ENCODE measurements at regions of chr16 and their contacts with region 1.

Region 1: GRCh38 chr16:1839554-1839953 is 12.5 kb downstream of the FAHD1 start:
- DNase-seq: no peak
- H3K4me3 ChIP-seq: no peak overlapping the region
- H3K27ac ChIP-seq: no peak overlapping the region
- H3K4me1 ChIP-seq: no peaks in the 10 kb centered on the region
- H3K27me3 ChIP-seq: no peaks in the 10 kb centered on the region
- CTCF ChIP-seq: no peak
- POLR2A ChIP-seq: no peak

Region 2: GRCh38 chr16:1871974-1872635 is 32.6 kb after region 1 on chr16 and contains the start of gene MEIOB:
- CTCF ChIA-PET with region 1: interaction called, 3 read pairs
- POLR2A ChIA-PET with region 1: no interaction called
- dilution Hi-C with region 1: no loop called
- intact Hi-C with region 1: loop called (anchors 5 kb)
- DNase-seq: peak; percentile 16
- H3K4me3 ChIP-seq: peak within 1 kb of the TSS in 2 of 3 experiments; percentile 13 to 23
- H3K27ac ChIP-seq: no peak within 1 kb of the TSS
- H3K4me1 ChIP-seq: peaks cover 2% of the 10 kb centered on the region
- H3K27me3 ChIP-seq: peaks cover 0 to 8% of the 10 kb centered on the region in 2 experiments
- CTCF ChIP-seq: no peak
- POLR2A ChIP-seq: no peak
- total RNA-seq, gene MEIOB: not detected in 2 replicates

Region 3: DNA sequence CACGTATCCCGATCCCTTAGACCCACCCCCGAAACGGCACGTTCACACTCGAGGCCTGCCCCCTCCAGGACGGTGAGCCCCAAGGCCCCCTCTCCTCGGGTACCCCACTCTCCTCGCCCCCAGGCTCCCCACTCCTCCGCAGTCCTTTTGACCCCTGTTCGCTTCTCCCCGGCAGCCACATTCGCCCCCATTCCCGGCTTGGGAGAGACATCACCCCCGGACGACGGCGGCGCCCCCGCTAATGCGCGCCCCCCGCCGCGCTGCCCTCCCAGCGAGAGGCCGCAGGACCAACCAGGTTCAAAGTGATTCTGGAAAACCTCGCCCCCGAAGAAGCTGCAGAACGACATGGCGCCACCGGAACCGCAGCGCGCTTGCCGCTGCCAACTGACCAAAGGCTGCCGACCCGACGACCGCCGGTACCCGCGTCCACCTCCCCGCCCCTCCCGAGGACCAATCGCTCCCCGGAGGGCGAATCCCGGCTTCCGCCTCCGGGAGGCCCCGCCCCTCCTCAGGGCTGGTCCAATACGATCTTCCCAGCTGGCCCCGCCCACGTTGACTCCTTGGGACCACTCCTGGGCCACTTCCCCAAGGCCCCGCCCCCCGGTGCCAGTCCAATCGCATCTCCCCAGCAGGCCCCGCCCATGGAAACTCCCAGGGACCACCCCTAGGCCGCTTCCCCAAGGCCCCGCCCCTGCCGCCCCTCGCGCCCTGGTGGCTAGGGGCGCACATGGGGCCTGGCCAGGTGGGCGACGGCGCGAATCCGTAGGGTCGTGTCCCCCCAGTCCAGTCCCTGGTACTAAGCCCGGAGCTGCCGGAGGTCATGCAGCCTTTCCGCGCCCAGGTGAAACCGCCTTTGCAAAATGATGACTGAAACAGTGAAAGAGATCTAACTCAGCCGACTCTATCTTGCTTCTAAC is 103.5 kb after region 1 on chr16 and contains the start of gene MSRB1:
- CTCF ChIA-PET with region 1: no interaction called
- POLR2A ChIA-PET with region 1: no interaction called
- dilution Hi-C with region 1: no loop called
- intact Hi-C with region 1: no loop called
- DNase-seq: peak; percentile 99
- H3K4me3 ChIP-seq: peak within 1 kb of the TSS; percentile 53 to 89 (median 62)
- H3K27ac ChIP-seq: no peak within 1 kb of the TSS
- H3K4me1 ChIP-seq: peaks cover 12% of the 10 kb centered on the region
- H3K27me3 ChIP-seq: no peaks in the 10 kb centered on the region
- CTCF ChIP-seq: peak in 1 of 2 donors; percentile 3
- POLR2A ChIP-seq: peak; percentile 91
- total RNA-seq, gene MSRB1: 20.7 and 25.0 TPM in 2 replicates